Breast epithelium (tissue), 4 donors: ENCODE measurements at regions of chr12 and their contacts with region 1.

Region 1: GRCh38 chr12:9902539-9903228 is 21.4 kb downstream of the KLRF2 start:
- DNase-seq: no peak
- H3K4me3 ChIP-seq: no peak overlapping the region
- H3K27ac ChIP-seq: no peak overlapping the region
- H3K4me1 ChIP-seq: no peaks in the 10 kb centered on the region
- H3K27me3 ChIP-seq: no peaks in the 10 kb centered on the region
- CTCF ChIP-seq: no peak
- POLR2A ChIP-seq: no peak

Region 2: DNA sequence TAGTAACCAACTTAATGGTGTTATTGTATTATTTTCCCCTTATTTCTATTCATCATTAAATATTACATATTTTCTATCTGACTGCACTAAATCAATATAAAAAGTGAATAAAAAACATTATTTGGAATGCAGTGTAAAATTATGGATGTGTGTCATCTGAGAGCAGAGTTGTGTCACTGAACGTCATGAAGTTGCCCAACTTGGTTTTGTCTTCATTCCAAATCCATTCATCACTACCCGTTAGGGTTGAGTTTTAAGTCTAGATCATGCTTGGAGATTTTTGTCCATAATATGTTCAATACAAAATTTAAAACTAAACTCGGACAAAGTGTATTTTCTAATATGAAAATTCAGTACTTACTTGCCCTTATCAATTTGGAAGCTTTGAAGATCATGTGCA is 59.3 kb before region 1 on chr12:
- intact Hi-C with region 1: loop called (anchors 2 kb)
- DNase-seq: no peak
- H3K4me3 ChIP-seq: no peak overlapping the region
- H3K27ac ChIP-seq: no peak overlapping the region
- H3K4me1 ChIP-seq: no peaks in the 10 kb centered on the region
- H3K27me3 ChIP-seq: no peaks in the 10 kb centered on the region
- CTCF ChIP-seq: no peak
- POLR2A ChIP-seq: no peak